Sigmoid colon (tissue), 7 donors: ENCODE measurements at regions of chr5 and their contacts with region 1.

Region 1: DNA sequence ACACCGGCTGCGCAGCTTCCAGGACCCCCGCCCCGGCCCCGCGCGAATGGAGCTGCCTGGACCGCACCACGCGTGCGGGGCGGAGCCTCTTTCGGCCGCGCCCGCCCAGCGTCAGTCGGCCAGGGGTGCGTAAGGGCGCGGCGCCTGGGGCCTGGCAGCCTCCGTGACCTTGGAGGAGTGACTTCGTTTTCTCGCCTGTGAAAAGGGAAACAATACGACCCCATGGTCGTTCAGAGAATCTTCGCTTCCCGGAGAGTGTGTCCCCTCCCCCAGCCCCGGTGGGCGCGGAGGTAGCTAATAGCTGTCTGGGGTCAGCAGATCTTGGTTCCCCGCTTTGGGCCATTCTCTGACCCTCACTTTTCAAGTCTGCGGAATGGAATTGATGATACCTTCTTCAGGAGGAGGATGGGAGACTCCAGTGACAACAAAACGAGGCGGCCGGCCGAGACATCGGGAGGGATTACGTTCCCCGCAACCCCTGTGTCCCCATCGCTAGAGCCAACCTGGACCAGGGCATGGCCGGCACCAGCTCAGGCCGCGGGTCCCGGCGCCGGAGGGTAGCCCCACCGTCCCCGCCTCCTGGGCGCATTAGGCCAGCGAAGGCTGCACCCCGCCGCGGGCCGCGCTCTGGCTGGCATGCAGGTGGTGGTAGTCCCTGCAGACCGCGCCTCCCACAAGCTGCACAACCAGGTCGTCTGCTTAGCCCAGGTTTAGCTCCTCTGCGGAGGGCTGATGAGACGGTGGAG is 5.5 kb upstream of the CDHR2 start:
- DNase-seq: peak; percentile 84
- H3K4me3 ChIP-seq: peak overlapping the region; percentile 47 to 82 (median 68)
- H3K27ac ChIP-seq: peak overlapping the region; percentile 81 to 91 (median 87)
- H3K4me1 ChIP-seq: peaks cover 0 to 40% (median 21%) of the 10 kb centered on the region in 4 donors
- H3K27me3 ChIP-seq: no peaks in the 10 kb centered on the region
- CTCF ChIP-seq: no peak
- EP300 ChIP-seq: no peak
- POLR2A ChIP-seq: peak in 1 of 2 donors; percentile 84

Region 2: DNA sequence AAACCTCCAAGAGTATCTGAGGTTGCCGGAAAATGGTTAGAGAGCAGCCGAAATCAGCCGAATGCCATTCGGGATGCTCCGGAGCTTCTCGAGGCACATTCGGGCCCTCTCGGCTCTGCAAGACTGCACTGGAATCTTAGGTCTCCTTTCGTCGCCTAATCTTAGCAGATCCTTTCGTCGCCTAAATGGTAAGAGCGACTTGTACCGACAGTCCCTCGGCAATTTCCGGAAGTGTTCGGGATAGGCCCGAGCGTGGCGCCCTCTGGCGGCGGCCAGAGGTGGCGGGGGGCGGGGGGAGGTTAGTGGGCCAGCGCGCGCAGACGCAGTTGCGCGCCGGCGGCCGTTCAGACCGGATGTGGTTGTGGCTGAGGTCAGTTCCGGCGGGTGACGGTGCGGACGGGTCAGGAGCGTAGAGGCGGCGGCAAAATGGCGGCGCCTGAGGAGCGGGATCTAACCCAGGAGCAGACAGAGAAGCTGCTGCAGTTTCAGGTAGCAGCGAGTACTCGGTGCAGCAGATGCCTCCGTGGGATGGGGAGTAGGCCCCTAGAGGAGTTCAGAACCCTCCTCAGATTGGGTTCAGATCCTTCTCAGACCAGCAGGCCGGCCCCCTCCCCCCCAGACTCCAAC is 95.5 kb before region 1 on chr5 and contains the start of gene FAF2:
- intact Hi-C with region 1: loop called (anchors 2 kb)
- DNase-seq: peak; percentile 98
- H3K4me3 ChIP-seq: peak within 1 kb of the TSS; percentile 65 to 99 (median 94)
- H3K27ac ChIP-seq: peak within 1 kb of the TSS; percentile 94 to 98 (median 96)
- H3K4me1 ChIP-seq: peaks cover 0 to 27% (median 25%) of the 10 kb centered on the region in 4 donors
- H3K27me3 ChIP-seq: no peaks in the 10 kb centered on the region
- CTCF ChIP-seq: peak; percentile 88 to 98 (median 96)
- EP300 ChIP-seq: peak in 1 of 4 donors; percentile 16
- POLR2A ChIP-seq: peak; percentile 67 to 85
- total RNA-seq, gene FAF2: 18.5 to 24.6 (median 19.1) TPM

Region 3: GRCh38 chr5:176887252-176887849 is 343.8 kb after region 1 on chr5:
- intact Hi-C with region 1: no loop called
- DNase-seq: peak; percentile 48
- H3K4me3 ChIP-seq: no peak overlapping the region
- H3K27ac ChIP-seq: no peak overlapping the region
- H3K4me1 ChIP-seq: no peaks in the 10 kb centered on the region
- H3K27me3 ChIP-seq: no peaks in the 10 kb centered on the region
- CTCF ChIP-seq: no peak
- EP300 ChIP-seq: no peak
- POLR2A ChIP-seq: no peak